Upper lobe of right lung (tissue), 1 donor: ENCODE measurements at regions of chr2 and their contacts with region 1.

Region 1: GRCh38 chr2:112584134-112584890 is at the start of gene CHCHD5:
- DNase-seq: peak; percentile 97
- ATAC-seq: peak; percentile 91
- H3K4me3 ChIP-seq: peak within 1 kb of the TSS; percentile 72
- H3K27ac ChIP-seq: peak within 1 kb of the TSS; percentile 92
- H3K4me1 ChIP-seq: peaks cover 10% of the 10 kb centered on the region
- H3K27me3 ChIP-seq: no peaks in the 10 kb centered on the region
- CTCF ChIP-seq: peak; percentile 21
- total RNA-seq, gene CHCHD5: 23.9 TPM

Region 2: GRCh38 chr2:112488201-112488600 is 96.1 kb before region 1 on chr2:
- intact Hi-C with region 1: loop called (anchors 5 kb)
- DNase-seq: no peak
- ATAC-seq: peak; percentile 36
- H3K4me3 ChIP-seq: no peak overlapping the region
- H3K27ac ChIP-seq: no peak overlapping the region
- H3K4me1 ChIP-seq: peaks cover 8% of the 10 kb centered on the region
- H3K27me3 ChIP-seq: no peaks in the 10 kb centered on the region
- CTCF ChIP-seq: no peak

Region 3: GRCh38 chr2:113930448-113930847 is 1346.1 kb after region 1 on chr2:
- intact Hi-C with region 1: no loop called
- DNase-seq: no peak
- ATAC-seq: no peak
- H3K4me3 ChIP-seq: no peak overlapping the region
- H3K27ac ChIP-seq: no peak overlapping the region
- H3K4me1 ChIP-seq: no peaks in the 10 kb centered on the region
- H3K27me3 ChIP-seq: no peaks in the 10 kb centered on the region
- CTCF ChIP-seq: no peak